ENCODE measurements at regions of chr11 and their contacts with region 1.

Region 1: GRCh38 chr11:66001942-66002647 is at the starts of genes BANF1 and EIF1AD:
- DNase-seq: peak; percentile 91 to 97 (median 95)
- H3K4me3 ChIP-seq: peak within 1 kb of the TSS; percentile 62 to 97 (median 95)
- H3K4me3 Mint-ChIP-seq: peak within 1 kb of the TSS; percentile 97 to 98
- H3K27ac ChIP-seq: peak within 1 kb of the TSS; percentile 92 to 95
- H3K27ac Mint-ChIP-seq: peak within 1 kb of the TSS; percentile 98 to 100 (median 100)
- H3K4me1 ChIP-seq: peaks cover 16 to 27% of the 10 kb centered on the region in 2 donors
- H3K4me1 Mint-ChIP-seq: peaks cover 18% of the 10 kb centered on the region
- H3K27me3 ChIP-seq: no peaks in the 10 kb centered on the region
- H3K27me3 Mint-ChIP-seq: no peaks in the 10 kb centered on the region
- CTCF ChIP-seq: no peak
- polyA plus RNA-seq, gene BANF1: 79.9 to 175 (median 142) TPM
- polyA plus RNA-seq, gene EIF1AD: 16.4 to 23.1 (median 18.2) TPM

Region 2: GRCh38 chr11:65961232-65961901 is 40.7 kb before region 1 on chr11 and contains the start of gene SART1:
- intact Hi-C with region 1: loop called (anchors 2 to 5 kb)
- DNase-seq: peak; percentile 94 to 97 (median 97)
- H3K4me3 ChIP-seq: peak within 1 kb of the TSS; percentile 74 to 97 (median 87)
- H3K4me3 Mint-ChIP-seq: peak within 1 kb of the TSS; percentile 91 to 95
- H3K27ac ChIP-seq: peak within 1 kb of the TSS; percentile 80 to 92
- H3K27ac Mint-ChIP-seq: peak within 1 kb of the TSS; percentile 95 to 99 (median 97)
- H3K4me1 ChIP-seq: peaks cover 18 to 31% of the 10 kb centered on the region in 2 donors
- H3K4me1 Mint-ChIP-seq: peaks cover 31% of the 10 kb centered on the region
- H3K27me3 ChIP-seq: no peaks in the 10 kb centered on the region
- H3K27me3 Mint-ChIP-seq: peaks cover 0 to 2% (median 2%) of the 10 kb centered on the region in 3 donors
- CTCF ChIP-seq: no peak
- polyA plus RNA-seq, gene SART1: 8.9 to 52.8 (median 16.1) TPM

Region 3: GRCh38 chr11:66022401-66023185 is 20.5 kb after region 1 on chr11:
- intact Hi-C with region 1: loop called in 1 of 2 experiments (anchors 2 kb)
- DNase-seq: peak; percentile 65 to 76 (median 70)
- H3K4me3 ChIP-seq: peak overlapping the region in 1 of 3 experiments; percentile 42
- H3K4me3 Mint-ChIP-seq: peak overlapping the region; percentile 57 to 84
- H3K27ac ChIP-seq: no peak overlapping the region
- H3K27ac Mint-ChIP-seq: peak overlapping the region in 5 of 7 donors; percentile 30 to 93 (median 77)
- H3K4me1 ChIP-seq: peaks cover 31 to 32% of the 10 kb centered on the region in 2 donors
- H3K4me1 Mint-ChIP-seq: peaks cover 31% of the 10 kb centered on the region
- H3K27me3 ChIP-seq: peaks cover 0 to 4% of the 10 kb centered on the region in 2 donors
- H3K27me3 Mint-ChIP-seq: peaks cover 11 to 14% (median 13%) of the 10 kb centered on the region in 3 donors
- CTCF ChIP-seq: peak; percentile 98